H1 (cell line): ENCODE measurements at regions of chr3 and their contacts with region 1.

Region 1: DNA sequence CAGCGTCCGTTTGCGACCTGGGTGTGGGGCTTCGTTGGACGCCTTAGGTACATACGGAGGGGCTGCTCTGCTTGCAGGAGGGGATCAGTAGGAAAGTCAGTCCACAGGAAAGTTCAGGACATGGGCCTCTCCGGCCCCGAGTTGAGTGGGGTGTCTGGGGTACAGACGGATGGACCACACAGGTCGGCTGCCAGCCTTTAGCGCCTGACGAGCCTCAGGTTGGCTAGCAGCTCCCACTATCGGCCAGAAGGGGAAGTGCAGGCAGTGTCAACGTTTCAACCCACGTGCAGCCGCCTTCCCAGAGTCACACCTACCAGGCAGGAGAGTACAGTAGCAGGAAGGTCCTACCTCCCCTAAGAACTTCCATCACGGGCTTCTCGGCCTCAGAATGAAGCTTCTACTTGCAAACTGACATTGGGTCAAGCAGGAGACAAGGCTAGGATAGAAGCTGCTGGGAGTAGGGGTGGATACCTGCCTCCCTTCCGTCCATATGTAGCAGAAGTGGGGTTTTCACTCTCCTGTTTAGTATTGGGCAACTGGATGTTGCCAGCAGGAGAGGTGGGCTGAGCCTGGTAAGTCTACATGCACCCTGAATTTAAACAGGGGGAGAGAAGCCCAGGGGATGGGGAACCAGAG is 1.8 kb upstream of the SCN5A start:
- DNase-seq: peak in 1 of 2 experiments; percentile 90
- H3K4me3 ChIP-seq: peak overlapping the region in 2 of 4 experiments; percentile 24 to 59; a peak in 5 of 8 replicates
- H3K27ac ChIP-seq: no peak overlapping the region
- H3K4me1 ChIP-seq: peaks cover 0 to 15% (median 6%) of the 10 kb centered on the region in 4 experiments; a peak in 5 of 7 replicates
- H3K27me3 ChIP-seq: peaks cover 0 to 47% (median 28%) of the 10 kb centered on the region in 4 experiments; a peak in 6 of 7 replicates
- CTCF ChIP-seq: peak; percentile 96 to 100 (median 100)
- EP300 ChIP-seq: no peak; a peak in 1 of 3 replicates
- POLR2A ChIP-seq: no peak
- RAD21 ChIP-seq: peak; percentile 91 to 96

Region 2: GRCh38 chr3:38334142-38335055 is 316.9 kb before region 1 on chr3:
- CTCF ChIA-PET with region 1: no interaction called
- POLR2A ChIA-PET with region 1: no interaction called
- DNase-seq: no peak
- H3K4me3 ChIP-seq: no peak overlapping the region
- H3K27ac ChIP-seq: no peak overlapping the region
- H3K4me1 ChIP-seq: no peaks in the 10 kb centered on the region
- H3K27me3 ChIP-seq: no peaks in the 10 kb centered on the region; a peak in 2 of 7 replicates
- CTCF ChIP-seq: no peak
- EP300 ChIP-seq: no peak
- POLR2A ChIP-seq: no peak
- RAD21 ChIP-seq: no peak

Region 3: GRCh38 chr3:38528457-38528856 is 122.8 kb before region 1 on chr3:
- CTCF ChIA-PET with region 1: interaction called, 318 read pairs
- POLR2A ChIA-PET with region 1: no interaction called
- DNase-seq: no peak
- H3K4me3 ChIP-seq: no peak overlapping the region
- H3K27ac ChIP-seq: no peak overlapping the region
- H3K4me1 ChIP-seq: peaks cover 0 to 10% (median 4%) of the 10 kb centered on the region in 4 experiments; a peak in 4 of 7 replicates
- H3K27me3 ChIP-seq: no peaks in the 10 kb centered on the region
- CTCF ChIP-seq: peak; percentile 64 to 79 (median 64)
- EP300 ChIP-seq: no peak
- POLR2A ChIP-seq: no peak
- RAD21 ChIP-seq: peak; percentile 66 to 78

Region 4: DNA sequence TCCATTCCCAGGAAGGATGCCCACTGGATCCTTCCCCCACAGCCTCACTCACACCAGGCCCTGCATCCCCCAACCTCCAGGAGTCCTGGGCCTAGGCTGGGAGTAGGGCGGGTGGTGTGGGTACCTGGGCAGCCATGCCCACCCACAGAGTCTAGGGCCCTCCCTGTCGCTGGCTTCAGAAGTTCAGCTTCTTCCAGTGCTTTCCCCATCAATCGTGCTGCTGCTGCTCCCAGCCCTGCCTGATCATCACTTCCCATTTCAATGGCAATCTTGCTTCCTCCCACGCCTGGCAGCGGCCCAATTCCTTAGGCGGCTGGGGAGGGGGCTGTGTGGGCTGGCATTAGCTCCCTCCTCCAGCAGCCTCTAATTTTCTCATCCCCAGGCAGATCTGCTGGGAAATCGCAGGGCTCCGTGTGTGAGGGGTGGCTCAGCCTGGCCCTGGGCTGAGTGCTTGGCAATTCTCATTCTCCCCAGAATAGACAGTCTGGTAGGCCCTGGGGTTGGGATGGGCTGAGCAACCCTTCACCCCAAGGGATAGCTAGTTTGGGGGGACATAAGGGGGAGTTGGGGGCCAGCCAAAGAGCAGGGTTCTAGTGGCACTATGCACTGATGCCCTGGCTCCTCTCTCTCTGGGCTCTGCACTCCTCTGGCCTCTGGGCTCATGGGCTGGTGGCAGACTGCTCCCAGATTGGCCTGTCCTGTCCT is 68.2 kb before region 1 on chr3:
- CTCF ChIA-PET with region 1: interaction called, 11 read pairs
- POLR2A ChIA-PET with region 1: no interaction called
- DNase-seq: peak in 1 of 2 experiments; percentile 27
- H3K4me3 ChIP-seq: no peak overlapping the region
- H3K27ac ChIP-seq: no peak overlapping the region
- H3K4me1 ChIP-seq: peaks cover 0 to 10% (median 0%) of the 10 kb centered on the region in 4 experiments; a peak in 2 of 7 replicates
- H3K27me3 ChIP-seq: no peaks in the 10 kb centered on the region; a peak in 2 of 7 replicates
- CTCF ChIP-seq: no peak
- EP300 ChIP-seq: no peak
- POLR2A ChIP-seq: no peak
- RAD21 ChIP-seq: no peak

Region 5: DNA sequence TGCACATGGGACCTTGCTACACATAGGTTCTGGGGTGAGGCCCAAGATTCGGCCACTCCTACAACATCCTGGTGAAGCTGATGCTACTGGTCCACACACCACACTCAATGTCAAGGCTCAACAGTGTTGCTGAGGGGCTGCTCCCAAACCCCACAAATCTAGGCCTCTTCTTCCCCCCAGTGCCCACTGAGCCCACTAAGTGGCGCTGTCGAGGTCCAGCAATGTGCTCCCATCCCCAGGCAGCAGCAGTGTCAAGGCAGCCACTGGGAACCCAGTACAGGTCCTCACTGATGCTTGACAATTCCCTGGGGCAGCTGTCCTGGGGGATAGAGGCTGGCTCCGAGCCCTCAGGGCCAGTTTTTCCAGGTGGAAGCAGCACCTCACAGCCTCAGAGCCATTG is 23.3 kb before region 1 on chr3:
- CTCF ChIA-PET with region 1: interaction called, 538 read pairs
- POLR2A ChIA-PET with region 1: no interaction called
- DNase-seq: peak in 1 of 2 experiments; percentile 89
- H3K4me3 ChIP-seq: no peak overlapping the region
- H3K27ac ChIP-seq: no peak overlapping the region
- H3K4me1 ChIP-seq: peaks cover 0 to 16% (median 4%) of the 10 kb centered on the region in 4 experiments; a peak in 6 of 7 replicates
- H3K27me3 ChIP-seq: no peaks in the 10 kb centered on the region
- CTCF ChIP-seq: peak in 2 of 3 experiments; percentile 94 to 98; a peak in 3 of 4 replicates
- EP300 ChIP-seq: no peak
- POLR2A ChIP-seq: no peak
- RAD21 ChIP-seq: peak; percentile 74 to 83

Region 6: GRCh38 chr3:38669668-38670067 is 18.4 kb after region 1 on chr3:
- CTCF ChIA-PET with region 1: interaction called, 33 read pairs
- POLR2A ChIA-PET with region 1: interaction called, 3 read pairs
- DNase-seq: no peak
- H3K4me3 ChIP-seq: no peak overlapping the region
- H3K27ac ChIP-seq: no peak overlapping the region
- H3K4me1 ChIP-seq: no peaks in the 10 kb centered on the region
- H3K27me3 ChIP-seq: no peaks in the 10 kb centered on the region
- CTCF ChIP-seq: no peak
- EP300 ChIP-seq: no peak
- POLR2A ChIP-seq: no peak
- RAD21 ChIP-seq: no peak

Region 7: GRCh38 chr3:39146984-39147591 is 495.8 kb after region 1 on chr3:
- CTCF ChIA-PET with region 1: no interaction called
- POLR2A ChIA-PET with region 1: no interaction called
- DNase-seq: no peak
- H3K4me3 ChIP-seq: no peak overlapping the region
- H3K27ac ChIP-seq: 0 out of 2 replicates have a peak overlapping the region, but pooled peaks have one; percentile 42
- H3K4me1 ChIP-seq: peaks cover 17 to 49% (median 32%) of the 10 kb centered on the region in 4 experiments
- H3K27me3 ChIP-seq: no peaks in the 10 kb centered on the region
- CTCF ChIP-seq: no peak
- EP300 ChIP-seq: no peak
- POLR2A ChIP-seq: no peak
- RAD21 ChIP-seq: no peak